ENCODE measurements at regions of chr7 and their contacts with region 1.

Region 1: GRCh38 chr7:28298870-28299518 is 113.3 kb upstream of the CREB5 start:
- DNase-seq: no peak
- ATAC-seq: peak; percentile 86

Region 2: DNA sequence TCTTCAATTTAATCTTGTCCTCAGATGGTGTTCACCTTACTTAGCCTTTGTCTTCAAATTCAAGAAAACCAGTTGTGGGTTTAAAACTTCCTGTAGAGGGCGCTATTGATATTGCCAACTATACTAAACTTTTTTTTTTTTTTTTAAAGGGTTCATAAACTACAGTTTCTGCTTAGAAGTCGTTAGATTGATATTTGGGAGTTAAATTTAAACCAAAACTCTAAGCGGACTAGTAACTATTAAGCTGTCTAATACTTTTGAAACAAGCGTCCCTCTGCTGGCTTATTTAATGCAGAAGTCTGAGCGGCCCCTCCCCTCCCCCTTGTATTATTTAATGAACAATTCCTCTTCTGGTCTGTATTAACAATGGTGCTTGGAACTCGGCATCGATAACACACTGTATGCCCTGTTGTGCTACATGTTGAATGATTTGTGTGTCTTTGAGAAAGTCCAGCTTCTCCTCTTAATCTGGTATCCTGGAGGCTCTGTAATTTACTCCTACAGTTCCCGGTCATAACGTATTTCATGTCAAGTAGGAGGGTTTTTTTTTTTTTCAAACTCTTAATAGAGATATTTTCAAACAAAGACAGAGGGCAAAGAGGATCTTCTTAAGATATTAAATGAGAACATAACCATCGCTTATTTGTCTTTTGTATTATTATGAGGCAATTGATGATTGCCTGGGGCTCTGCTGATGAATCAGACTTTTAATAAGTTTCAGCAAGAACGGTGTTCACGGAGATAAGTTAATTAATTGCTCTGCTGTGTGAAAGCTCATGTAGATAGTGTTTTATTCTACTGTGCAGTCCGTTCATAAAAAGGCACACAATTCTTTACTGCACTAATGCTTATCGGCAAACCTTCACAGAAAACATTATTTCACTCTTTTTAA is 90.8 kb after region 1 on chr7:
- intact Hi-C with region 1: loop called (anchors 10 kb)
- DNase-seq: no peak
- ATAC-seq: peak; percentile 78

Region 3: DNA sequence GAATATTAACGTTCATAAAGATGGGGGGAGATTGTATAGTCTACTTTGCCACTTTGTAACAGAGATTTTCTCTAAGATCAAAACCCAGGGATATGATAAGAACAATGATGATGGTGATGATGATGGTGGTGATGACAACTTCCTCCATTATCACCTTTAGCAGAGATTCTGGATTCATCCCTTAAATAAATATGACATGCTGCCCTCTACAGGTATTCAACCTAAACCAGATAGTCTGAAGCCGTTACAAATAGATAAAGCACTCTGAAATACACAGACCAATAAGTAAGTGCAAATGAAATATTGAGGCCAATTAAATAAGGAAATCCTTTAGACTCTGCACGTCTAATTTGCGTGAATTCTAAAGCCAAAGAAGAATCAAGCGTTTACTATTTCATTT is 324.9 kb after region 1 on chr7:
- intact Hi-C with region 1: loop called (anchors 5 kb)
- DNase-seq: no peak
- ATAC-seq: peak; percentile 32

Region 4: DNA sequence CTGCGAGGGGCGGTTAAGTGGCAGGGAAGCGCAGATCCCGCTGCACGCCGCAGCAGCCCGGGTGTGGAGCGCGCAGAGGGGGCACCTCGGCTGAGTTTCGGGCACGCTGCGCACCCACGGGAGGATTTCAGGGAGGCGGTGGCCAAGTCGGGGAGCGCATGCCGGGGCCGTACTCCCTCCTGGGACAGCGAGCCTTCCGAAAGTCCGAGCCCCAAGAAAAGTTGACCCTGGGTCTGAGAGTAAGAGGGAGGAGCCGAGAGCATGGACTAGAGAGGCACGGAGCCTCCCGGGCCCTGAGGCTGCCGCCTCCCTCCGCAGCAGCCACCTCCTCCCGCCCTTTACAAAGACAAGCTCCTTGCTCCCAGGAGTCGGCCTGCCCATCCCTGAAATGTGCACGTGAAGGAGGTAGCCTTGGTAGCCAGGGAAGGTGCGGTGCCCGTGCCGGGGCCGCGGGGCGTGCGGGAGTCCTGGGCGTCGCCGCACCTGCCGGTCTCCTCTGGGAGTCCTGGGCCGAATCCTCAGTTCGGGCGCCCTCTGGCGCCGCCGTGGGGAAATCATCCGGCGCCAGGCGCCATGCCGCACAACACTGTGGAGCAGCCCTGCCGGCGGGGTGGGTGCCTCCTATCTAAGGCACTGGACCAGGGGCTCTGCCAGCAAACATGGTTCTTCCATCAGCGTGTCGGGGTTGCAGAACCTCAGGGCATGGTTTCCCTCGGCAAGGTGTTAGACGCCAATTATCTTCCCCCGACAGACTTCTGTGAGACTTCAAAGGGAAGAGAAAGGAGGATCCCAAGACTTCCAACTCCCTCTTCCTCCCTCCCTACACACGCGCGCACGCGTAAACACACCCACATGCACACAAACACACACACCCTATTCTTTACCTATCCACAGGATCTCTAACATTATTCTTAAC is 555.1 kb after region 1 on chr7:
- intact Hi-C with region 1: loop called (anchors 5 kb)
- DNase-seq: peak; percentile 90
- ATAC-seq: peak; percentile 99